Left ventricle myocardium superior (tissue), 1 donor: ENCODE measurements at regions of chr11 and their contacts with region 1.

Region 1: GRCh38 chr11:61384271-61385242 is 7.8 kb upstream of the TMEM216 start:
- DNase-seq: no peak
- ATAC-seq: no peak

Region 2: DNA sequence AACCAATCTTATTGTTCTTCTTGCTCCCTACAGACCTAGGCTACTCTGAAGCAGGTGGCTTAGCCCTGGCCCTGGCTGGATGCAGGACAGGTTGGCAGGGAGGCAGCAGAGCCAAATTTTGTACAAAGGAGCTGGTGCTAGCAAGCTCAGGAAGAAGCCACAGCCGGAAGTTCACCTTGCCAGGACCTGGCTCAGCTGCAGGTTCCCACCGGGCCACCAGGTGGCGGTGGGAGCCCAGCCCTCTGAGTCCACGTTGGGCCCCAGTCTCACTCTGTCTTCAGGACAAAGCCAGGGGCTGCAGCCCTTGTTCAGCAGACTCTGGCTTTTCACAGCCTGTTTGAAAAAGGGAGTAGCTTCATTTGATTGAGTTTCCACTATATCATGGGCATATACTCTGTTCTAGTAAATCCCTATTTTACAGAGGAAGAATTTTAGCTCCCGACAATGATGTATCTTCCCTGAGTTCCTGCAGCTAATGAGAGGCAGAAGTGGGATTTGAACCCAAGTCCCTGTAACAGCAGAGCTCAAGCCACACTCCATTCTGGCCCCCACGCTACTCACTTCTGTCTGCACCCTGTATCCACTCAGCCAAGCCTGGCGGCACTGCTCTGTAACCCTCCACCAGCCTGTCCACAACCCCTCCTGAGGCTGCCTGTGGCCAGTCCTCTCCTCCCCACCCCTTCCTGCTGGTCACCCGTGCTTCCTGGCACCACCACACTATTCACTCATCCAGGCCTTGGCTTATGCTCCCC is 48.2 kb before region 1 on chr11:
- intact Hi-C with region 1: loop called (anchors 2 kb)
- DNase-seq: peak; percentile 86
- ATAC-seq: peak; percentile 58